ENCODE measurements at regions of chr2 and their contacts with region 1.

Region 1: GRCh38 chr2:26993768-26994167 is 23.3 kb downstream of the MAPRE3 start:
- DNase-seq: no peak
- H3K4me3 ChIP-seq: no peak overlapping the region
- CTCF ChIP-seq: no peak

Region 2: DNA sequence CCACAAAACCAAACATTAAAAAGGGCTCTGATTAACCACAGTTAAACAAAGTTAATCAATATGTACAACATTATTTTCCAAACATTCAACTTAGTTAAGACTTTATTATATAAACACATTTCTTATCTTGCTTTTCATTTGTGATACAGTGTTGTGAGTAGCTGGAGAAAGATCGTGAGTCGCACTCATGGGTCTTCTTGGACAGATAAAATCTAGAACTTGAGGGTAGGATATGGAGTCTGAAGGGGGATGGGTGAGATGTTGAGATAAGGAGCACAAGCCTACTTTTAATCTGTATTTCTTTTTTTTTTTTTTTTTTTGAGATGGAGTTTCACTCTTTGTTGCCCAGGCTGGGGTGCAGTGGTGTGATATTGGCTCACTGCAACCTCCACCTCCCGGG is 16.4 kb after region 1 on chr2:
- CTCF ChIA-PET with region 1: interaction called, 28 read pairs
- POLR2A ChIA-PET with region 1: no interaction called
- DNase-seq: no peak
- H3K4me3 ChIP-seq: no peak overlapping the region
- CTCF ChIP-seq: no peak